AG04449 (cell line): ENCODE measurements at regions of chr19 and their contacts with region 1.

Region 1: DNA sequence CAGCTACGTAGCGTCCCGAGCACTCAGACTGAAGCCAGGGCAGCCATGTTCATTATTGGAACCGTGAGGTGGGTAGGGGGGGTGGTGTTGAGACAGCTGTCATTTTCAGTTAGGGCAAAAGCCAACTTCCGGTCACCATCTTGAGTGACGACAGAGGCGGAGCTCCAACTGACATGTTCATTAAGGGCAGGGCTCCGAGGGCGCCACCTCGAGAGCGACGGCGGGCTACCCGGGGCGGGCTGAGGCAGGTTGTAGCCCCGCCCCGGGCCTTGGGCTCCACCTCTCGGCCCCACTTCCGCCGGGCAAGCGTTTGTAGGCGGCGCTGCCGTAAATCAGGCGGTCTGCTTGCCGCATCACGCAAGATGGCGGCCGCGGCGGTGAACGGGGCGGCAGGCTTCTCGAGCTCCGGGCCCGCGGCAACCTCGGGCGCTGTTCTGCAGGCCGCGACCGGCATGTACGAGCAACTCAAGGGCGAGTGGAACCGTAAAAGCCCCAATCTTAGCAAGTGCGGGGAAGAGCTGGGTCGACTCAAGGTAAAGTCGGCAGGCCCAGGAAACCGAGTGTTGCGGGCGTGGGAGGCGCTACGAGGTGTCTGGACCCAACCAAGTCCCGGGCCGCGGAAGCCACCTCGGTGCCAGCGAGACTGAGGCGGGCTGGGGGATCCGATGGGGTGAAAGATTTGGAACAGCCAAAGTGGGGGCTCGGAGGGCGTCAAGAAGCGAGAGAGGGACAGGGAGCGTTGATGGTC is at the start of gene PSMD8:
- DNase-seq: peak; percentile 86
- H3K4me3 ChIP-seq: peak within 1 kb of the TSS; percentile 83
- CTCF ChIP-seq: peak; percentile 36

Region 2: GRCh38 chr19:38335949-38336637 is 38.5 kb before region 1 on chr19:
- CTCF ChIA-PET with region 1: interaction called, 17 read pairs
- POLR2A ChIA-PET with region 1: interaction called, 4 read pairs
- DNase-seq: peak; percentile 44
- H3K4me3 ChIP-seq: peak overlapping the region; percentile 89
- CTCF ChIP-seq: no peak

Region 3: GRCh38 chr19:38355728-38356725 is 18.6 kb before region 1 on chr19:
- CTCF ChIA-PET with region 1: no interaction called
- POLR2A ChIA-PET with region 1: no interaction called
- DNase-seq: no peak
- H3K4me3 ChIP-seq: no peak overlapping the region
- CTCF ChIP-seq: no peak

Region 4: DNA sequence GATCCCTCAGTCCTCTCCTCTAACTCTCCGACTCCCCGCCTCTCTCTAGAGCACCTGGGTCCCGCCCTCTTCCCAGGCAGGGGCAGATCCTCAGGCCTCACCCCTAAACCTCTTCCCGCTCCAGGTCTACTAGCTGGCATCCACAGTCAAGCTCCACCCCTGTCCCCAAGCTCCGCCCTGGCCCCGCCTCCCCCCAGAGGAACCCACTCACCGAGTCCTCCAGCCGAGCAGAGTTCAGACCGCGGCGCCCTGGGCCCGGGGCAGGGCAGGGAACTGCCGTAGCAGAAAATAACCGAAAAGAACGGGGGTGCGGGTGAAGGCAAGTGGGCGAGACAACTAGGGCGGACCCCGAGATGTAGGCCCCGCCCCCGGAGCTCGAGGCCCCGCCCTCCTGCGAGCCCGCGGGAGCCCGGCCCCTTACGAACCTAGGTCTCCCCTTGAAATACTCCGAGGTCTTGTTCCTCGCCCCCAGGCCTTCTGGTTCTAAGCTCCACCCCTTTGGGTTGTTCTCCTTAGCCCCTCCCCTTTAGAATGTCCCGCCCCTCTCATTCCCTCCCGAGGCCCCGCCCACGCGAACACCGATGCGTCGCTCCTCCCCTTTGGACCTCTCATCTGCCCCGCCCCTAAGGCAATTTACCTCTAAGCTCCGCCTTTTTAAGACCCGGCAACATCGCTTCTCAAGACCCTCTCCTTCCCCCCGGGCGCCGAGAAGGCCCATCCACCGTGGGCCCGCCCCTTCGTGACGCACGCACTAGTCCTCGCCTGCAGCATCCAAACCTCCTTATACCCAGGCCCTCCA is 13.1 kb after region 1 on chr19 and contains the start of gene GGN:
- CTCF ChIA-PET with region 1: interaction called, 41 read pairs
- POLR2A ChIA-PET with region 1: interaction called, 35 read pairs
- DNase-seq: peak; percentile 75
- H3K4me3 ChIP-seq: peak within 1 kb of the TSS; percentile 75
- CTCF ChIP-seq: no peak